Activated CD4-positive, alpha-beta memory T cell treated with anti-CD3 and anti-CD28 coated beads, Interleukin-2, amount 10 ng/mL, durations not matched to agents 7 days and 5 days (primary cell): ENCODE measurements at regions of chr1 and their contacts with region 1.

Region 1: DNA sequence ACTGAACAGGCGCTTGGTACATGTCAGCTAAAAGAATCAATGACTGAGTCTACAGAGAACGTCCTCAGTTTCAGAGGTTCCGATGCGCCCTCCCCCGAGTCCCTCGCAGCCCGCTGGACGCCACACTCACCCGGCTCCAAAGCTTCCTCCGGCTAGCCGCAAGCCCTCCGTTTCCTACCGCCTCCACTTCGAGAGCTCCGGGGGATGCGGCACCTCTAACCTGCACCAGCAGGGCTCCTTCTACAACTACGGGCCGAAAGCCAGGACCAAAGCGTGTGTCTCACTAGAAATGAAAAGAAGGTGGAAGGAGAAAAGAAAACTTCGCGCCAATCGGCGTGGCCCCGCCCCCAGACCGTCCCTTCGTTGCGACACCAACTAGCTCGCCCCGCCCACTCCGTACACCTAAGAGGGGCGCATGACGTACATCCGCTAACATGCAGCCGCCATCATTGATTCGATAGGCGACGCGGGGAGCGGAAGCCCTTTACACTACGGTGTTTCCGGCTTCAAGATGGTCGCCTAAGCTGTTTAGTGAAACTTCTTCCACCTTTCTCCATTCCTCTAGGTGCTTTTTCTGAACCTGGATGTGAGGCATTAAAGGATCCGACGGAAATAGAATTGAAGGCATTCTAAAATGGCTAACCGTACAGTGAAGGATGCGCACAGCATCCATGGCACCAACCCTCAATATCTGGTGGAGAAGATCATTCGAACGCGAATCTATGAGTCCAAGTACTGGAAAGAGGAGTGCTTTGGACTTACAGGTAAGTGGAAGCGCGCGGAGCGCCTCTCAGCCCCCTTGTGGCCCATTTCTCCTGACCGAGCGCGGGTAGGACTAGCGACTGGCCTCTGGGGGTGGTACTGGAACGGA is at the starts of genes ORC1 and PRPF38A:
- DNase-seq: peak; percentile 98
- H3K4me3 Mint-ChIP-seq: peak within 1 kb of the TSS; percentile 100
- H3K27ac Mint-ChIP-seq: peak within 1 kb of the TSS; percentile 100
- H3K4me1 Mint-ChIP-seq: peaks cover 67% of the 10 kb centered on the region
- H3K27me3 Mint-ChIP-seq: no peaks in the 10 kb centered on the region
- total RNA-seq, gene ORC1: 27.0 to 28.3 TPM
- total RNA-seq, gene PRPF38A: 84.1 to 86.5 TPM

Region 2: GRCh38 chr1:52033190-52034049 is 370.9 kb before region 1 on chr1 and contains the start of gene KTI12:
- CTCF ChIA-PET with region 1: no interaction called
- POLR2A ChIA-PET with region 1: interaction called, 10 read pairs
- DNase-seq: peak; percentile 91
- H3K4me3 Mint-ChIP-seq: peak within 1 kb of the TSS; percentile 89
- H3K27ac Mint-ChIP-seq: peak within 1 kb of the TSS; percentile 90
- H3K4me1 Mint-ChIP-seq: peaks cover 34% of the 10 kb centered on the region
- H3K27me3 Mint-ChIP-seq: no peaks in the 10 kb centered on the region
- total RNA-seq, gene KTI12: 11.3 to 11.5 TPM

Region 3: GRCh38 chr1:52190500-52191252 is 213.7 kb before region 1 on chr1:
- CTCF ChIA-PET with region 1: no interaction called
- POLR2A ChIA-PET with region 1: no interaction called
- DNase-seq: no peak
- H3K4me3 Mint-ChIP-seq: no peak overlapping the region
- H3K27ac Mint-ChIP-seq: no peak overlapping the region
- H3K4me1 Mint-ChIP-seq: no peaks in the 10 kb centered on the region
- H3K27me3 Mint-ChIP-seq: no peaks in the 10 kb centered on the region

Region 4: GRCh38 chr1:52359676-52360594 is 44.4 kb before region 1 on chr1:
- CTCF ChIA-PET with region 1: interaction called, 4 read pairs
- POLR2A ChIA-PET with region 1: interaction called, 71 read pairs
- DNase-seq: no peak
- H3K4me3 Mint-ChIP-seq: no peak overlapping the region
- H3K27ac Mint-ChIP-seq: no peak overlapping the region
- H3K4me1 Mint-ChIP-seq: peaks cover 23% of the 10 kb centered on the region
- H3K27me3 Mint-ChIP-seq: no peaks in the 10 kb centered on the region

Region 5: DNA sequence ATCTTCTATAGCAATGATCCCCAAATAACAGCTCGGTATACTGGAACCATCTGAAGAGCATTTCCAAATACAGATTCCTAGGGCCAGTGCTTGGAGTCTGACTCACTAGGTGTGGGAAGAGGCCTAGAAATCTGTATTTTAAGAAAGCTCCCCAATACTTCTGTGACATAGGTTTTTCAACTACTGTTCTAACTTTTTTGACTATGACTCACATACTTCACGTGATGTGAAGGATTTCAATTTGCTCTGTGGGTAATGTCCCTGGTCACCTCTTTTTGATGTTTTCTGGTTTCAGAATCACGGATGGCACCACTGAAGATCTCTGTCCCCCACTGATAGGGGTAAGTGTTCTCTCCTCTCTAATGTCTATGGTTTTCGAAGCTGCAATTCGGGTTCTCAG is 11.2 kb before region 1 on chr1:
- CTCF ChIA-PET with region 1: interaction called, 4 read pairs
- POLR2A ChIA-PET with region 1: interaction called, 14 read pairs
- DNase-seq: no peak
- H3K4me3 Mint-ChIP-seq: no peak overlapping the region
- H3K27ac Mint-ChIP-seq: no peak overlapping the region
- H3K4me1 Mint-ChIP-seq: peaks cover 17% of the 10 kb centered on the region
- H3K27me3 Mint-ChIP-seq: no peaks in the 10 kb centered on the region

Region 6: DNA sequence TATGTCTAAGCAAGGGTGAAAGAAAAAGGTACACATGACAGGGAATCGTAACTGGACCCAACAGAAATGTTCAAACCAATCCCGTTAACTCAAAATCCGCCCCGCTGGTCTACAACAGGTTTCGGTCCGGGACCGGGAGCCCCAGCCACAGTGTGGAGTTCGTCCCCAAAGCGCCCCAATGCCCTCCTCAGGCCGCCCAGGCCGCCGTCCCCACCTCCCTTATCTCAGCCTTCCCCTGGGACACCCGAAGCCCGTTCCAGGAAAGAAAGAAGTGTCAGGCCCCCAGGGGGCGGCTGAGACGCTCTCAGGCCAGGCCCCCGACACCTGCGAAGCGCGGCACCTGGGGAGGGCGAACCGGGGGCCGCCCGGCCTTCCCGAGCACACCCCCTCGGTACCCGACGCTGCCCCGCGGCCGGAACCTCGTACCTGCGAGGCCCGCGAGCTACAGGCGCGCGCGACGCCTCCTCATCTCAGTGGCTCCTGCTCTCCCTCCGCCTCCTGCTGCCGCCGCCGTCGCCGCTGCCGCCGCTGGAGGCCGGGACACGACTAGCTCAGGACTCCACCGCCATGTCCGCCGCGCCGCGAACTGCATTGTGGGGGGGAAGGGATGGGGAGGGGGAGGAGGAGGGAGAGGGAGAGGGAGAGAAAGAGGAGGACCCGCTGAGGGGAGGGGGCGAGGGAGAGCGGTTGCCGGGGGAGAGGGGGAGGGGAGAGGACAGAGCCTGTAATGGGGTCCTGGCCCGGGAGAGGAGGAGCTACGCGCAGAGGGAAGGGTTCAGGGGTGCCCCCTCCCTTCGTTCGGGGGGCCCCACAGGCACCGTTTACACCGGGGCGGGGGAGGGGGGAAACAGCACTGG is 148.4 kb after region 1 on chr1 and contains the start of gene TUT4:
- CTCF ChIA-PET with region 1: interaction called, 10 read pairs
- POLR2A ChIA-PET with region 1: interaction called, 43 read pairs
- DNase-seq: peak; percentile 81
- H3K4me3 Mint-ChIP-seq: no peak within 1 kb of the TSS
- H3K27ac Mint-ChIP-seq: peak within 1 kb of the TSS; percentile 3
- H3K4me1 Mint-ChIP-seq: peaks cover 21% of the 10 kb centered on the region
- H3K27me3 Mint-ChIP-seq: no peaks in the 10 kb centered on the region
- total RNA-seq, gene TUT4: 68.1 to 71.8 TPM

Region 7: DNA sequence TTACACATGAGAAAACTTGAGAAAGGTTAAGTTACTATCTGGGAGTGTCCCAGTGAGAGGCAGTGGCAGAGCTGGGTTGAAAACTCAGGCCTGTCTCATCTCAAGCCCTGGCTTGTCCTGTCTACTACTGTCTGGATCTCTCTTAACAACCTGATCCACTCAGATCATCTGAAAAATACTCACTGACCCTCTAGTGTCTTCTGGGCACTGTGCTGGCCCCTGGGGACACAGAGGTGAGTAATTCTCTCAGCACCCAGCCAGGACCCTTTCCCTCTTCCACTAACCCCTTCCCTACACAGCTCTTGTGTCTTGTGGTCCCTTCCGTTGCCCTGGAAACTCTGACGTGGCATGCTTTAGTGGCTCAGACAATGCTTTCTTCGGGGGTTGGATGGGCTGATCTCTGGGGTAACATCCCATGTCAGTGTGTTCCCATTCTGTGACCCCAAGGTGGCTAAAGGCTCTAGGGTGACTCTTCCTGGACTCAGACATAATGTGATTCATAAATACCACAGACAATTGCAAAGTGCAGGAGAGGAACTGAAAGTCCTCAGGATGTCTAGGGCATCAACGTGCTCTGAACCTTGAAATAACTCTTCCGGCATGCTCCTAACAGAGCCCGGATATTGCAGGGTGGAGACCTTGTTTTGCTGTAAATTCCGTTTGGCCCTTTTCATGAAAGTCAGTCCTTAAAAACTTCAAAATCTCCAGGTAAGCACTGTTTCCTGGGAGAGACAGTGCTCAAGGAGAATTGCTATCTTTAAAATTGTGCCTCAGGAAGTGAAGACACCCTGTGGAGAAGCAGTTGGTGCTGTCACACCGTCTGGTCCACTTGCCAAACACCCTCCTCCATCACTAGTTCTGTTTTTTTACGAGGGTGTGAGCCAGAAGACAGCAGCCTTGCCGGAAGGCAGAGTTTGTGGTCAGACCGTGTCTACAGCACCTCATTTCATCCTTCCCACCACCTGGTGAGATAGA is 232.7 kb after region 1 on chr1:
- CTCF ChIA-PET with region 1: interaction called, 6 read pairs
- POLR2A ChIA-PET with region 1: interaction called, 28 read pairs
- DNase-seq: peak; percentile 78
- H3K4me3 Mint-ChIP-seq: peak overlapping the region; percentile 59
- H3K27ac Mint-ChIP-seq: peak overlapping the region; percentile 98
- H3K4me1 Mint-ChIP-seq: peaks cover 70% of the 10 kb centered on the region
- H3K27me3 Mint-ChIP-seq: peaks cover 10% of the 10 kb centered on the region

Region 8: DNA sequence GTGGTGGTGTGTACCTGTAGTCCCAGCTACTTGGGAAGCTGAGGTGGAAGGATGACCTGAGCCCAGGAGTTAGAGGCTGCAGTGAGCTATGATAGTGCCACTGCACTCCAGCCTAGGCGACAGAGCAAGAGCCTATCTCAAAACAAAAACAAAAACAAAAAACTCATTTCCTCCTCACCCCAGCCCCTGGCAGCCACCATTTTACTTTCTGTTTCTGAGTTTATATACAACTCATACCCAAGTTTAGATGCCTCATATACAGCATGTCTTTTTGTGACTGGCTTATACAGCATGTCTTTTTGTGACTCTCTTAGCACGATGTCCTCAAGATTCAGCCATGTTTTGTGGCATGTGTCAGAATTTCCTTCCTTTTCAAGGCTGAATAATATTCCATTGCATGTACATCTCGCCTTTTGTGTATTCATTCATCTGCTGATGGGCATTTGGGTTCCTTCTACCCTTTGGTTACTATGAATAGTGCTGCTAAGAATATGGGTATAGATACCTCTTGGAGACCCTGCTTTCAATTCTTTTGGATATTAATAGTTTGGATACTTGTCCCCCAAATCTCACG is 279.1 kb after region 1 on chr1:
- CTCF ChIA-PET with region 1: interaction called, 37 read pairs
- POLR2A ChIA-PET with region 1: interaction called, 10 read pairs
- DNase-seq: no peak
- H3K4me3 Mint-ChIP-seq: no peak overlapping the region
- H3K27ac Mint-ChIP-seq: peak overlapping the region; percentile 0
- H3K4me1 Mint-ChIP-seq: peaks cover 16% of the 10 kb centered on the region
- H3K27me3 Mint-ChIP-seq: no peaks in the 10 kb centered on the region